ENCODE measurements at regions of chr12 and their contacts with region 1.

Region 1: DNA sequence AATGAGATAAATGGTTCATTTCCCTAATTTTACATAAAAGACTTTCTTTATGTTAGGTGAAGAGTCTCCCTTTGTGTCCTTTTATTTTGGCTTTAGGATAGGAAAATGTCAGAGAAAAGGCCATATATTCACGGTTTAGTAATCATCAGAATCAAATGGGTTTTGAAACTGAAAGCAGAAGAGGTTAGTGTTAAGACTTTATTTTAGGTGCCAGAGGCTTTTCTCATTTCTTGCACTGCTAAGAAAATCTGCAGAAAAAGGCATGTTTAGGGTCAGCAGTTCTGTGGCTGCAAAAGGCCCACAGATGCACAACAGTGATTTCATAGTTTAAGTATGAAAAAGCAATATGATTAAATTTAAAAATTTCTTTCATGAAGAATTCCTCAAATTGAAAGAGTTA is 80.4 kb upstream of the SINHCAF start:
- DNase-seq: no peak
- H3K4me3 ChIP-seq: no peak overlapping the region
- H3K27ac ChIP-seq: no peak overlapping the region
- H3K27me3 ChIP-seq: no peaks in the 10 kb centered on the region
- CTCF ChIP-seq: no peak

Region 2: GRCh38 chr12:31339831-31340622 is 66.3 kb before region 1 on chr12:
- CTCF ChIA-PET with region 1: no interaction called
- POLR2A ChIA-PET with region 1: interaction called, 11 read pairs
- DNase-seq: no peak
- H3K4me3 ChIP-seq: no peak overlapping the region
- H3K27ac ChIP-seq: no peak overlapping the region
- H3K27me3 ChIP-seq: peaks cover 4% of the 10 kb centered on the region
- CTCF ChIP-seq: no peak

Region 3: GRCh38 chr12:31423405-31423804 is 17.1 kb after region 1 on chr12:
- CTCF ChIA-PET with region 1: interaction called, 11 read pairs
- POLR2A ChIA-PET with region 1: no interaction called
- DNase-seq: no peak
- H3K4me3 ChIP-seq: no peak overlapping the region
- H3K27ac ChIP-seq: no peak overlapping the region
- H3K27me3 ChIP-seq: no peaks in the 10 kb centered on the region
- CTCF ChIP-seq: no peak

Region 4: GRCh38 chr12:31456562-31456961 is 50.2 kb after region 1 on chr12:
- CTCF ChIA-PET with region 1: no interaction called
- POLR2A ChIA-PET with region 1: no interaction called
- DNase-seq: no peak
- H3K4me3 ChIP-seq: no peak overlapping the region
- H3K27ac ChIP-seq: peak overlapping the region; percentile 13
- H3K27me3 ChIP-seq: no peaks in the 10 kb centered on the region
- CTCF ChIP-seq: no peak

Region 5: GRCh38 chr12:31589904-31590641 is 183.7 kb after region 1 on chr12:
- CTCF ChIA-PET with region 1: interaction called, 12 read pairs
- POLR2A ChIA-PET with region 1: interaction called, 10 read pairs
- DNase-seq: no peak
- H3K4me3 ChIP-seq: peak overlapping the region; percentile 86
- H3K27ac ChIP-seq: peak overlapping the region; percentile 93
- H3K27me3 ChIP-seq: no peaks in the 10 kb centered on the region
- CTCF ChIP-seq: no peak

Region 6: GRCh38 chr12:31641509-31642090 is 235.3 kb after region 1 on chr12:
- CTCF ChIA-PET with region 1: interaction called, 76 read pairs
- POLR2A ChIA-PET with region 1: no interaction called
- DNase-seq: no peak
- H3K4me3 ChIP-seq: no peak overlapping the region
- H3K27ac ChIP-seq: no peak overlapping the region
- H3K27me3 ChIP-seq: peaks cover 6% of the 10 kb centered on the region
- CTCF ChIP-seq: no peak